Activated T-helper 1 cell treated with anti-CD3 and anti-CD28 coated beads, Interleukin-12 subunit alpha, Interleukin-12 subunit beta, Interleukin-2, Interleukin-4 antibody, amounts not matched to agents 30 ng/mL and 10 ng/mL and 1 ng/mL, durations not matched to agents 14 hours and 24 hours and 36 hours (primary cell): ENCODE measurements at regions of chr5 and their contacts with region 1.

Region 1: DNA sequence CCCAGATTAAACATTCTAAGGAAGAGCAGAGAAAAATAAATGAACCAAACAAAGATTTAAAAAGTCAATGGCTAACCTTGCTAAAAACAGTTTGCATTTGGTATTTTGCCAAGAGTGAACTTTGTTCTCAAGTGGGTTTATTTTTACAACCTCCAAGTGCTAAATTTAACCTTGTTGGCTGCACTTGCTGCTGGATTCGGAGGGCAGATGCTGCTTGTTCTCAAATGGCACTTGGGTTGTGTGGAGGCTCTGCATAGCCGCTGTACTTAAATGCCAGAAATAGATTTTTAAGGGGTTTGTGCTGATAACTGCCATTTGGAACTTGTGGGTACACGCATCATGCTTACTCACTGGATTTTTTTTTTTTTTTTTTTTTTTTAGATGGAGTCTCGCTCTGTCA is 13.3 kb upstream of the SPATA24 start:
- DNase-seq: no peak
- H3K4me3 Mint-ChIP-seq: no peak overlapping the region
- H3K27ac Mint-ChIP-seq: peak overlapping the region; percentile 94
- H3K4me1 Mint-ChIP-seq: peaks cover 61% of the 10 kb centered on the region
- H3K27me3 Mint-ChIP-seq: no peaks in the 10 kb centered on the region

Region 2: GRCh38 chr5:139061274-139061673 is 355.9 kb before region 1 on chr5:
- intact Hi-C with region 1: no loop called
- DNase-seq: no peak
- H3K4me3 Mint-ChIP-seq: no peak overlapping the region
- H3K27ac Mint-ChIP-seq: no peak overlapping the region
- H3K4me1 Mint-ChIP-seq: no peaks in the 10 kb centered on the region
- H3K27me3 Mint-ChIP-seq: no peaks in the 10 kb centered on the region

Region 3: GRCh38 chr5:139147483-139148087 is 269.6 kb before region 1 on chr5:
- intact Hi-C with region 1: loop called (anchors 1 kb)
- DNase-seq: no peak
- H3K4me3 Mint-ChIP-seq: no peak overlapping the region
- H3K27ac Mint-ChIP-seq: no peak overlapping the region
- H3K4me1 Mint-ChIP-seq: peaks cover 23% of the 10 kb centered on the region
- H3K27me3 Mint-ChIP-seq: no peaks in the 10 kb centered on the region

Region 4: DNA sequence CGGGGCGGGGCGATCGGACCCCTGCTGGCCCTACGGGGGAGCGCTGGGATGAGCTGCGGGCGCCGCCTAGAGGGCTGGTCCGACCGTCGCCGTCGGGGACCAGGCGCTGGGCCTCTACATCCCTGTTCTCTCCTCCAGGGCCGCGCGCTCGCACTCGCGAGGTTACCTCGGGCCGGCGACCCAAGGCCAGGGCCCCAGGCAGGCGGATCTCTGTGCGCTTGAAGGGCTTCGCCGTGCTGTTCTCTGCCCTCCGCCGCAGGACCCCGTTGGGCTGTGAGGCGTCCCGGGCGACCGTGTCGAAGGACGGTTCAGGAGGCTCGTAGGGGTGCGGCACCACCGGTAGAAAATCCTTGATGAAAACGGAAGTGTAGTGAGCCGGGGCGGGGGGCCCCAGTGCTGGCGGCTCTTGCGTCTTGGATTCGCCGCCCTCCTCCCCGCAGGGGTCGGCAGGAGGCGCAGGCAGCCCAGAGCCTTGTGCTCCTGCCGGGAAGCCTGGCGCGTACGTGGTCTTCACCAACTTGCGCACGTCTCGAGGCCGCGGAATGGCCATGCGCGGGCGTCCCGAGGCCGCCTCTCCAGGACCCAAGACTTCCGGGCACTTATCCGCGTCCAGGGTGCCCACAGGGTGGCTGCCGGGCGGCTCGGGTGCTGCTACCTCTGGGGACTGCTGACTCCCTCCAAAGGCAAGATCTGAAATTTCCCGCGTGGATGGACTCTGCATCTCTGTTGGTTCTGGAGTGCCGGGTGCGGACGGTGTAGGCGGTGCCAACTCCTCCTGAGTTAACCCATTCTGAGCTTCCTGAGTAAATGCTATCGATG is 24.3 kb before region 1 on chr5:
- intact Hi-C with region 1: loop called (anchors 1 kb)
- DNase-seq: peak; percentile 84
- H3K4me3 Mint-ChIP-seq: peak overlapping the region; percentile 96
- H3K27ac Mint-ChIP-seq: peak overlapping the region; percentile 95
- H3K4me1 Mint-ChIP-seq: peaks cover 58% of the 10 kb centered on the region
- H3K27me3 Mint-ChIP-seq: no peaks in the 10 kb centered on the region

Region 5: GRCh38 chr5:139439013-139439903 is 22.0 kb after region 1 on chr5 and contains the start of gene DNAJC18:
- intact Hi-C with region 1: loop called (anchors 1 kb)
- DNase-seq: peak; percentile 86
- H3K4me3 Mint-ChIP-seq: peak within 1 kb of the TSS; percentile 95
- H3K27ac Mint-ChIP-seq: peak within 1 kb of the TSS; percentile 99
- H3K4me1 Mint-ChIP-seq: peaks cover 66% of the 10 kb centered on the region
- H3K27me3 Mint-ChIP-seq: no peaks in the 10 kb centered on the region
- total RNA-seq, gene DNAJC18: 30.0 and 36.3 TPM in 2 replicates

Region 6: DNA sequence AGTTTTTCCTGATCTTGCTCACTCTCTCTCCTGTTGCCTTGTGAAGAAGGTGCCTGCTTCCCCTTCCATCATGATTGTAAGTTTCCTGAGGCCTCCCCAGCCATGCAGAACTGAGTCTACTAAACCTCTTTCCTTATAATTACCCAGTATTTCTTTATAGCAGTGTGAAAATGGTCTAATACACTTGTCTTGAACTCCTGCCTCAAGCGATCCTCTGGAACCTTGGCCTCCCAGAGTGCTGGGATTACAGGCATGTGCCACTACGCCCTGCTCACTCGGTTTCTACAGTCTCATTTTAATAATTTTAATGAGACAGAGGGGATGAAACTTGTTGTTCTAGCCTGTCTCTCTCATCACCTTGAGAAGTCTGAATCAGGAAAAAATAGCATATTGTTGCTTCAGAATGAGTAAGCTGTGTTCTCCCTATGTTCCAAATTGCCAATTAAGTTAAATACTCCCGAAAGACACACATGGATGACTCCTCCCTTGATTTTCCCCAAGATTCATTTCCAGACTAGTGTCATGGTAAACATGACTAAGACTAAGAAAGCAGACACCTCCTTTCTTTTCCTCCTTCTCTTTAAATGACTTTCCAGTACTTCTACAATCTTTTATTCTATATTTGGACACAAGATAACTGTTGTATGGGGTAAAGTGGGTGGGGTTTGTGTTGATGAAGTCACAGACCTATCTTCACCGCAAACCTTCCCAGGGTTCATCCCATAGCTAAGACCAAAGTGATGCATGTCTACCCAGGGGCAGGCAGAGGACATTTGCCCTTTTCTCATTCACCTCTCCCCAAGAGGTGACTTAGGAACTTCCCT is 30.0 kb after region 1 on chr5:
- intact Hi-C with region 1: loop called (anchors 1 kb)
- DNase-seq: no peak
- H3K4me3 Mint-ChIP-seq: peak overlapping the region; percentile 46
- H3K27ac Mint-ChIP-seq: peak overlapping the region; percentile 98
- H3K4me1 Mint-ChIP-seq: peaks cover 64% of the 10 kb centered on the region
- H3K27me3 Mint-ChIP-seq: no peaks in the 10 kb centered on the region

Region 7: DNA sequence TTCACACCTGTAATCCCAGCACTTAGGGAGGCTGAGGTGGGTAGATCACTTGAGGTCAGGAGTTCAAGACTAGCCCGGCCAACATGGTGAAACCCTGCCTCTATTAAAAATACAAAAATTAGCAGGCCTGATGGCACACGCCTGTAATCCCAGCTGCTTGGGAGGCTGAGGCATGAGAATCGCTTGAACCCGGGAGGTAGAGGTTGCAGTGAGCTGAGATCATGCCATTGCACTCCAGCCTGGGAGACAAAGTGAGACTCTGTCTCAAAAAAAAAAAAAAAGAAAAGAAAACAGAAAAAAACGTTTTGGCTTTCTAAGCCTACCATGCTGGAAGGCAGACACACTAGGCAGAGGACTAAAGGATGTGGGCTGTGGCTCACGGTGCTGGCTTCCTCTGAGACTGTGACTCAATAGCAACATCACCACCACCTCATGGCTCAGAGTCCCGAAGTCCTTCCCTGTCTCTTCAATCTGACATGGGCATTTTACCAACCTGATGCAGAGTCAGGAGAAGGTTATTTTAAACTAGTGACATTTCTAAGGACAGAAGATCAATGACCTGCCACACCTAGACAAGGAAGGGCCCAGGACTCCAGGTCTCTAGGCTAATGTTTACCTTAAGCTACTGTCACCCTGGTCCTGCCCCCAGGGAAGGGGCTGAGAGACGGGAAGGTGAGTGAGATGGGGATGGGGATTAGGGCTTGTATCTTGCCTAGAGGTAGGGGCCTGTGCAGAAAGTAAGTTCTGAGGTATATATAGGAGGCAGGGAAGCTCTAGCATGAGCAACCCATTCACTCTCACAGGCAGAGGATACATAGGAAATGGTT is 41.6 kb after region 1 on chr5:
- intact Hi-C with region 1: loop called (anchors 1 kb)
- DNase-seq: peak; percentile 80
- H3K4me3 Mint-ChIP-seq: peak overlapping the region; percentile 81
- H3K27ac Mint-ChIP-seq: peak overlapping the region; percentile 99
- H3K4me1 Mint-ChIP-seq: peaks cover 72% of the 10 kb centered on the region
- H3K27me3 Mint-ChIP-seq: no peaks in the 10 kb centered on the region

Region 8: DNA sequence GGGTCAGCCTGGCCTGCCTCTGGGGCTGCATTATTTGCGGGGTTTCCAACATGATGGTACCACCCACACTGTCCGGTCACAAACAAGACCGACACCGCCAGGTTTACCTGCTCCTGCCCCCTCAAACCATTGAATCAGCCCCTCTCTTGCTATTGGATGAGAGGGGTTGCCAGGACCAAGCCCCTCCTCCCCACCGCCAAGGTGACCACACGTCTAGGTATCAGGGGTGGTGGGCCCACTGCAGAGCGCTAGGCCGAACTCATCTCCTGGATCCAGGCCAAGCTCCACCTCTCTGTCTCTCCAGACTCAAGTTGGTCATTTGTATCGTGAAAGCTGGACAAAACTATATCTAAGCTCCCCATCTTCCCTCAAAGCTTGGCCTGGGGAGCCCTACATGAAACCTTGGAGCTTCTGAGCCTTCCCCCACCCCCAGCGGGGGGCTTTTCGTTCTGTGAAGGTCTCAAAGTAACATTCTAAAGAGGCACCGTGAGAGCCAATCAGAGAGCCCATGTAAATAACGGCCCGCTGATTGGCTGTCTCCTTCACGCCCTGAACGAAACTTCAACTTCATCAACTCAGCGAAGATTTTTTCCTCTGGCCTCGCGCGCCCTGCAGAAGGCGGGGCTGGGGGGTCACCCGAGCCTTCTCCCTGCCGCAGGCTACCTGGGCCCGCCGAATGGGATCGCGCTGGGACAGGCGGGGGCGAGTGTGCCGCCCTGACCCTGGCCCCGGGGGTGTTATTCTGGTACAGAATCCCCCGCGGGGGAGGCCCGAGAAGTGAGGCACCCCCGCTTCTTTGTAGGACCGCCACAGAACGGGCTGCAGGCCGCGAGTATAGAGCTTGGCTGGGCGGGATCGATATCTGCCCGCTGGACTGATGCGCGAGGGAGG is 328.8 kb after region 1 on chr5:
- intact Hi-C with region 1: loop called (anchors 10 kb)
- DNase-seq: peak; percentile 19
- H3K4me3 Mint-ChIP-seq: peak overlapping the region; percentile 85
- H3K27ac Mint-ChIP-seq: peak overlapping the region; percentile 26
- H3K4me1 Mint-ChIP-seq: peaks cover 24% of the 10 kb centered on the region
- H3K27me3 Mint-ChIP-seq: peaks cover 45% of the 10 kb centered on the region

Region 9: GRCh38 chr5:139783436-139783965 is 366.3 kb after region 1 on chr5:
- intact Hi-C with region 1: no loop called
- DNase-seq: no peak
- H3K4me3 Mint-ChIP-seq: no peak overlapping the region
- H3K27ac Mint-ChIP-seq: no peak overlapping the region
- H3K4me1 Mint-ChIP-seq: no peaks in the 10 kb centered on the region
- H3K27me3 Mint-ChIP-seq: peaks cover 25% of the 10 kb centered on the region

Region 10: DNA sequence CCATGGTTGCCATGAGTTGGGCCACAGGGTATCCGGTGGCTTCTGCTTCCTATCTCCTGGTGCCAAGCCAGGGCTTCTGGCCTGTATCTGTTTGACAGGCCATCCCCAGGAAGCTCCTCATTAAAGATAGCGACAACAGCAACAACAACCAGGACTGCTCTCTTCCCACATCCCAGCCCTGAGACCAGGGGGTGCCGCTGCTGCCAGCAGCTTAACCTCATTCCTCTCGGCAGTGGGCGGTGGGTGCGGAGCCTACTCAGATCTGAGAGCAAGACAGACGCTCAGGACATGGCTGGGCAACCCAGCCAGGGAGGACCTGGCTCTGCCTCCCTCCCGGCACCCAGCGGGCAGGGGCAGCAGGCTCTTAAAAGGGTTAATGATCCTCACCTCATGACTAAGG is 476.7 kb after region 1 on chr5:
- intact Hi-C with region 1: no loop called
- DNase-seq: no peak
- H3K4me3 Mint-ChIP-seq: no peak overlapping the region
- H3K27ac Mint-ChIP-seq: no peak overlapping the region
- H3K4me1 Mint-ChIP-seq: no peaks in the 10 kb centered on the region
- H3K27me3 Mint-ChIP-seq: peaks cover 20% of the 10 kb centered on the region